CD4-positive, alpha-beta T cell (primary cell): ENCODE measurements at regions of chr2 and their contacts with region 1.

Region 1: GRCh38 chr2:237966565-237967462 is at the start of gene UBE2F:
- DNase-seq: peak; percentile 94 to 98 (median 96)
- ATAC-seq: peak; percentile 94
- H3K4me3 ChIP-seq: peak within 1 kb of the TSS; percentile 86
- H3K4me3 Mint-ChIP-seq: peak within 1 kb of the TSS; percentile 91
- H3K27ac ChIP-seq: peak within 1 kb of the TSS; percentile 14 to 58
- H3K27ac Mint-ChIP-seq: peak within 1 kb of the TSS; percentile 86
- H3K4me1 ChIP-seq: peaks cover 45% of the 10 kb centered on the region
- H3K4me1 Mint-ChIP-seq: peaks cover 36% of the 10 kb centered on the region
- H3K27me3 ChIP-seq: no peaks in the 10 kb centered on the region
- H3K27me3 Mint-ChIP-seq: no peaks in the 10 kb centered on the region
- CTCF ChIP-seq: no peak
- total RNA-seq, gene UBE2F: 23.2 to 27.4 TPM

Region 2: GRCh38 chr2:237700512-237701032 is 266.2 kb before region 1 on chr2:
- CTCF ChIA-PET with region 1: no interaction called
- POLR2A ChIA-PET with region 1: no interaction called
- intact Hi-C with region 1: loop called in 1 of 2 experiments (anchors 10 kb)
- DNase-seq: peak in 11 of 14 experiments; percentile 35 to 92 (median 59)
- ATAC-seq: peak; percentile 67
- H3K4me3 ChIP-seq: no peak overlapping the region
- H3K4me3 Mint-ChIP-seq: peak overlapping the region; percentile 83
- H3K27ac ChIP-seq: peak overlapping the region; percentile 57 to 64
- H3K27ac Mint-ChIP-seq: peak overlapping the region; percentile 93
- H3K4me1 ChIP-seq: peaks cover 99% of the 10 kb centered on the region
- H3K4me1 Mint-ChIP-seq: peaks cover 98% of the 10 kb centered on the region
- H3K27me3 ChIP-seq: no peaks in the 10 kb centered on the region
- H3K27me3 Mint-ChIP-seq: no peaks in the 10 kb centered on the region
- CTCF ChIP-seq: no peak

Region 3: GRCh38 chr2:238009563-238009962 is 42.7 kb after region 1 on chr2:
- CTCF ChIA-PET with region 1: interaction called, 4 read pairs
- POLR2A ChIA-PET with region 1: no interaction called
- intact Hi-C with region 1: loop called in 1 of 2 experiments (anchors 5 kb)
- DNase-seq: no peak
- ATAC-seq: peak; percentile 24
- H3K4me3 ChIP-seq: no peak overlapping the region
- H3K4me3 Mint-ChIP-seq: no peak overlapping the region
- H3K27ac ChIP-seq: no peak overlapping the region
- H3K27ac Mint-ChIP-seq: peak overlapping the region; percentile 6
- H3K4me1 ChIP-seq: peaks cover 3% of the 10 kb centered on the region
- H3K4me1 Mint-ChIP-seq: peaks cover 55% of the 10 kb centered on the region
- H3K27me3 ChIP-seq: no peaks in the 10 kb centered on the region
- H3K27me3 Mint-ChIP-seq: no peaks in the 10 kb centered on the region
- CTCF ChIP-seq: no peak

Region 4: DNA sequence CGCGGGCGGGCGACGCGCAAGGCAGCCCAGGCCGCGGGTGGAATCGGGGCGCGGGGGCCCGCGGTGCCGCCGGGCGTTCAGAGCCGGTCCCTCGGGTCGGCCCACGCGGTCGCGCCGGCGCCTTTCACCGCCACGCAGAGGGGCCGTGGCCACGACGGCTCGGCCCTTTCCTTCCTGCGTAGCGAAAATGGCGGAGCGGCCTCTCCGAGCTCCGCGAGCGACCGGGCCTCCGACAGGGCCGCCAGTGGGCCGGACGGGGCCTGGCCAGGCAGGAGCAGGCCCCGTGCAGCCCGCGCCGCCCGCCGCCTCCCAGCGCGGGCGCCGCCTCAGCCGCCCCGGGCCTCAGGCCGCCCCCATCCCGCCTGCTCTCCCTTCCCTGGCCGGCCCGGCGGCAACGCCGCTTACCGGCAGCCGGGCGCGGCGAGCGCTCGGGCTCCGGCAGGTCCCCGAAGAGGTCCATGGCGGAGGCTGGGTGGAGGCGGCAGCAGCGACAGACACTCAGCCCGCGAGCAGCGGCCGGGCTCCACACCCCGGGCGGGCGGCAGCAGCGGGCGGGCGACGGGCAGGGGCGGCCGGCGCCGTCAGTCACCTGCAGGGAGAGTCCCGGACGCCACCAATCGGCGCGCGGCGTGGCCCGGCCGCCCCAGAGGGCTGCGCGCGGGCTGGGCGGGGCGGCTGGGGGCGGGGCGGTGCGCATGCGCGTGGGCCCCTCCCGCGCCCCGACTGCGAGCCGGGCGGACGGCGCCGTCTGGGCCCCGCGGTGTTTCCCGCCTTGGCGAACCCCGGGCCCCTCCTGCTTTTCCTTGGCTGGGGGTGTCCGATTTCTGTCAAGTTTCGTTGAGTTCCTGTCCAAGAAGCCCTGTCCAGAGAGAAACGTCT is 236.5 kb after region 1 on chr2 and contains the start of gene ILKAP:
- CTCF ChIA-PET with region 1: no interaction called
- POLR2A ChIA-PET with region 1: interaction called, 3 read pairs
- intact Hi-C with region 1: loop called in 1 of 2 experiments (anchors 5 kb)
- DNase-seq: peak; percentile 83 to 97 (median 89)
- ATAC-seq: peak; percentile 97
- H3K4me3 ChIP-seq: peak within 1 kb of the TSS; percentile 70
- H3K4me3 Mint-ChIP-seq: peak within 1 kb of the TSS; percentile 95
- H3K27ac ChIP-seq: peak within 1 kb of the TSS; percentile 77 to 79
- H3K27ac Mint-ChIP-seq: peak within 1 kb of the TSS; percentile 91
- H3K4me1 ChIP-seq: peaks cover 34% of the 10 kb centered on the region
- H3K4me1 Mint-ChIP-seq: peaks cover 40% of the 10 kb centered on the region
- H3K27me3 ChIP-seq: no peaks in the 10 kb centered on the region
- H3K27me3 Mint-ChIP-seq: no peaks in the 10 kb centered on the region
- CTCF ChIP-seq: no peak
- total RNA-seq, gene ILKAP: 133 to 143 TPM

Region 5: GRCh38 chr2:238263204-238264071 is 296.6 kb after region 1 on chr2:
- CTCF ChIA-PET with region 1: interaction called, 5 read pairs
- POLR2A ChIA-PET with region 1: no interaction called
- intact Hi-C with region 1: loop called (anchors 5 kb)
- DNase-seq: peak; percentile 59 to 86 (median 71)
- ATAC-seq: peak; percentile 70
- H3K4me3 ChIP-seq: no peak overlapping the region
- H3K4me3 Mint-ChIP-seq: no peak overlapping the region
- H3K27ac ChIP-seq: no peak overlapping the region
- H3K27ac Mint-ChIP-seq: no peak overlapping the region
- H3K4me1 ChIP-seq: peaks cover 8% of the 10 kb centered on the region
- H3K4me1 Mint-ChIP-seq: peaks cover 6% of the 10 kb centered on the region
- H3K27me3 ChIP-seq: no peaks in the 10 kb centered on the region
- H3K27me3 Mint-ChIP-seq: no peaks in the 10 kb centered on the region
- CTCF ChIP-seq: peak; percentile 85

Region 6: GRCh38 chr2:238426568-238427434 is 460.0 kb after region 1 on chr2 and contains the start of gene ASB1:
- CTCF ChIA-PET with region 1: no interaction called
- POLR2A ChIA-PET with region 1: no interaction called
- intact Hi-C with region 1: loop called in 1 of 2 experiments (anchors 5 kb)
- DNase-seq: peak; percentile 55 to 89 (median 76)
- ATAC-seq: peak; percentile 69
- H3K4me3 ChIP-seq: peak within 1 kb of the TSS; percentile 88
- H3K4me3 Mint-ChIP-seq: peak within 1 kb of the TSS; percentile 89
- H3K27ac ChIP-seq: peak within 1 kb of the TSS; percentile 74 to 75
- H3K27ac Mint-ChIP-seq: peak within 1 kb of the TSS; percentile 90
- H3K4me1 ChIP-seq: peaks cover 38% of the 10 kb centered on the region
- H3K4me1 Mint-ChIP-seq: peaks cover 56% of the 10 kb centered on the region
- H3K27me3 ChIP-seq: no peaks in the 10 kb centered on the region
- H3K27me3 Mint-ChIP-seq: no peaks in the 10 kb centered on the region
- CTCF ChIP-seq: no peak
- total RNA-seq, gene ASB1: 14.3 to 19.6 TPM

Region 7: GRCh38 chr2:238513346-238513745 is 546.5 kb after region 1 on chr2:
- CTCF ChIA-PET with region 1: no interaction called
- POLR2A ChIA-PET with region 1: no interaction called
- intact Hi-C with region 1: no loop called
- DNase-seq: peak in 1 of 14 experiments; percentile 14
- ATAC-seq: no peak
- H3K4me3 ChIP-seq: no peak overlapping the region
- H3K4me3 Mint-ChIP-seq: no peak overlapping the region
- H3K27ac ChIP-seq: no peak overlapping the region
- H3K27ac Mint-ChIP-seq: no peak overlapping the region
- H3K4me1 ChIP-seq: no peaks in the 10 kb centered on the region
- H3K4me1 Mint-ChIP-seq: no peaks in the 10 kb centered on the region
- H3K27me3 ChIP-seq: no peaks in the 10 kb centered on the region
- H3K27me3 Mint-ChIP-seq: no peaks in the 10 kb centered on the region
- CTCF ChIP-seq: no peak